Activated T-helper 2 cell treated with anti-CD3 and anti-CD28 coated beads, Interferon-gamma antibody, Interleukin-2, Interleukin-4, amounts not matched to agents 10 μg/mL and 5 μg/mL and 100 μg/mL, durations not matched to agents 14 hours and 24 hours and 36 hours (primary cell): ENCODE measurements at regions of chr21 and their contacts with region 1.

Region 1: GRCh38 chr21:25501996-25502665 is 105.2 kb downstream of the MRPL39 start:
- DNase-seq: no peak
- H3K4me3 Mint-ChIP-seq: no peak overlapping the region
- H3K27ac Mint-ChIP-seq: peak overlapping the region; percentile 92
- H3K4me1 Mint-ChIP-seq: peaks cover 40% of the 10 kb centered on the region
- H3K27me3 Mint-ChIP-seq: no peaks in the 10 kb centered on the region

Region 2: DNA sequence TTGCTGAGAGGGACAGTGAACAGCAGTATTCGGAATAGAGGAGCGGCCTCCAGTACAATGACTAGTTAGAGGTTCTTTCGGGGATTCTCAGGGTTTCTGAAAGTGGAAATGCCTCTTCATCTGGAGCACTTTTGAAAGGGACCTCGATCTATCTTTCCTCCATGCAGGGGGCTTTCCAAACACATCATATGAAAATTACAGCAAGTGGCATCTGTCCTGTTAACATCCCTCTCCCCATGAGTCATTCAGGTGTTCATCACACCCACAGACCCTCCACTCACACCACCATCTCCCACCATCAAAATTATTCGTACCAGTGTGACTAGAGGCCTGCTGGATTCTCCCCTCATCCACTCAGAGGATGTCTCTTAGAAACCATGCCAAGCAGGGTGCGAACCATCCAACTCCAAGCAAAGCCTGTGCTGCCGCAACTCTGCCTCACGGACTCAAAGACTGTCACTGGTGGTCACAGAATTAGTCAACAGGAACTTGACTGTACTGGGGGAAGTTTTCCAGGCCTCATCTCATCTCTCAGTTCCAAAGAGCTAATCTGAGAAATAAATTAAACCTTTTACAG is 105.9 kb before region 1 on chr21:
- intact Hi-C with region 1: loop called (anchors 1 kb)
- DNase-seq: peak; percentile 48
- H3K4me3 Mint-ChIP-seq: peak overlapping the region; percentile 2
- H3K27ac Mint-ChIP-seq: peak overlapping the region; percentile 88
- H3K4me1 Mint-ChIP-seq: peaks cover 17% of the 10 kb centered on the region
- H3K27me3 Mint-ChIP-seq: no peaks in the 10 kb centered on the region

Region 3: DNA sequence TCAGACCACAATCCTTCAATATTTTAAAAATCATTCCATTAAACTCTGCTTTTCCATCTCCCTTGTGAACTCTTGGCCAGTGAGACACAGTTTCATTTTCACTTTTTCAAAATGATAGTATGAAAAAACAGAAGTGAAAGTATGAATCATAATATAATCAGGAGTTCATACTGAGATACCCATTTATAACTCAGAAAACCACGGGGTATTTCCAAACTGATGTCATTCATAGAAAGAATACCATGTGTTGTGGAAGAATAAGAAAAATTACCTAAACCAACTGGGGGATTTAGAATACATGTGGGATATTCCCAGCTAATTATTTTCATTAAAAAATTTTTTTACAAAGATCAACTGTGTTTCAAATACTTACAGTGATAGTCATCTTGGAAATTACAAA is 44.7 kb before region 1 on chr21:
- intact Hi-C with region 1: loop called (anchors 1 kb)
- DNase-seq: no peak
- H3K4me3 Mint-ChIP-seq: peak overlapping the region; percentile 58
- H3K27ac Mint-ChIP-seq: peak overlapping the region; percentile 84
- H3K4me1 Mint-ChIP-seq: peaks cover 50% of the 10 kb centered on the region
- H3K27me3 Mint-ChIP-seq: no peaks in the 10 kb centered on the region

Region 4: GRCh38 chr21:25464275-25464674 is 37.9 kb before region 1 on chr21:
- intact Hi-C with region 1: loop called (anchors 1 kb)
- DNase-seq: no peak
- H3K4me3 Mint-ChIP-seq: no peak overlapping the region
- H3K27ac Mint-ChIP-seq: peak overlapping the region; percentile 93
- H3K4me1 Mint-ChIP-seq: peaks cover 60% of the 10 kb centered on the region
- H3K27me3 Mint-ChIP-seq: no peaks in the 10 kb centered on the region